ENCODE measurements at regions of chr20 and their contacts with region 1.

Region 1: GRCh38 chr20:31308535-31309162 is at the start of gene DEFB116:
- DNase-seq: no peak
- ATAC-seq: no peak
- H3K4me3 Mint-ChIP-seq: no peak within 1 kb of the TSS
- H3K27ac Mint-ChIP-seq: no peak within 1 kb of the TSS
- H3K4me1 Mint-ChIP-seq: no peaks in the 10 kb centered on the region
- H3K27me3 Mint-ChIP-seq: no peaks in the 10 kb centered on the region
- total RNA-seq, gene DEFB116: not detected

Region 2: DNA sequence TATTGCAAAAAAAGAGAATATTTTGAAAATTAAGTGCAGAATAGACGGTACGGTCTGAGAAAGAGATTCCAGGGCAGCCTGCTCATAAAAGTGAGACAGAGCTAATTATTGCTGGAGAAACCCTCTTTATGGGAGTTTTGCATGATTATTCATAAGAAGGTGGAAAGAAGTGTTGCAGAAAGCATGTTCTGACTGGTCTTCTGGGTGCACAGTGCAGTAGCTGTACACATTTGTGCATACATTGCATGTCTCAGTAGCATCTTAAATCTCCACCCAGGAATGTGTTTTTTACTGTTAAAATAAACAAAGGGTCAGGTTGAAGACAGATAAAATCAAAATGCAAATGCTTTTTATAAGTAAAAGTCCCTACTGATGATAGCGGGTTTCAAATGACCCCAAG is 1864.8 kb before region 1 on chr20:
- CTCF ChIA-PET with region 1: no interaction called
- POLR2A ChIA-PET with region 1: no interaction called
- intact Hi-C with region 1: loop called in 1 of 2 experiments (anchors 5 kb)
- DNase-seq: no peak
- ATAC-seq: no peak
- H3K4me3 Mint-ChIP-seq: no peak overlapping the region
- H3K27ac Mint-ChIP-seq: no peak overlapping the region
- H3K4me1 Mint-ChIP-seq: peaks cover 4% of the 10 kb centered on the region
- H3K27me3 Mint-ChIP-seq: no peaks in the 10 kb centered on the region

Region 3: GRCh38 chr20:31236953-31237352 is 71.7 kb before region 1 on chr20:
- CTCF ChIA-PET with region 1: no interaction called
- POLR2A ChIA-PET with region 1: no interaction called
- intact Hi-C with region 1: loop called in 1 of 2 experiments (anchors 10 kb)
- DNase-seq: no peak
- ATAC-seq: no peak
- H3K4me3 Mint-ChIP-seq: no peak overlapping the region
- H3K27ac Mint-ChIP-seq: no peak overlapping the region
- H3K4me1 Mint-ChIP-seq: no peaks in the 10 kb centered on the region
- H3K27me3 Mint-ChIP-seq: no peaks in the 10 kb centered on the region

Region 4: DNA sequence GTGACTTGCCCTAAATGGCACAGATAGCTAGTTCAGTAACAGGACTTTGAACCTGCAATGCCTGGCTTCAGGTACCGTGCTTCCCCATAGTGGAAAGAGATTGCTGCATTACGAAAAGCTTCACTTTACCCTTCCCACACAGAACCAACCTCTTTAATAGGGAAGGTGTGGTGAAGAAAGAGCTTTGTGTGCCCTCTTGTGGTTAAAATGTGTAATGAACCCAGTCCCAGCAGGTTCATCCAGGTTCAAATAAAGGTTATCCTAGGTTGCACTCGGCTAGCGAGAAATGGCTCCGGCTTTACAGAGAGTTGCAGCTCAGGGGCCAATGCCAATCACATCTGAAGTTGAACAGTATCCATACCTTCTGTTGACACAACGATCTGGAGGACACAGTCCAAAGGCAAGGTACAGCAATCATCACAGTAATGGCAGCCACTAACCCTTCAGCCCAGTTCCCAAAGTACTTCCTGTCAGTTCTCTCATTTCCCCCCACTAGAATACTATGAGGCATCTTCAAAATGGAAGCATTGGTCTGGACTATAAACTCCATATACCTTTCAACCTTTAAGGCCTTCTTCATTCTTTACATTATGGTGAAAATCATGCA is 48.2 kb before region 1 on chr20:
- CTCF ChIA-PET with region 1: no interaction called
- POLR2A ChIA-PET with region 1: no interaction called
- intact Hi-C with region 1: loop called in 1 of 2 experiments (anchors 2 kb)
- DNase-seq: no peak
- ATAC-seq: no peak
- H3K4me3 Mint-ChIP-seq: no peak overlapping the region
- H3K27ac Mint-ChIP-seq: no peak overlapping the region
- H3K4me1 Mint-ChIP-seq: no peaks in the 10 kb centered on the region
- H3K27me3 Mint-ChIP-seq: no peaks in the 10 kb centered on the region

Region 5: DNA sequence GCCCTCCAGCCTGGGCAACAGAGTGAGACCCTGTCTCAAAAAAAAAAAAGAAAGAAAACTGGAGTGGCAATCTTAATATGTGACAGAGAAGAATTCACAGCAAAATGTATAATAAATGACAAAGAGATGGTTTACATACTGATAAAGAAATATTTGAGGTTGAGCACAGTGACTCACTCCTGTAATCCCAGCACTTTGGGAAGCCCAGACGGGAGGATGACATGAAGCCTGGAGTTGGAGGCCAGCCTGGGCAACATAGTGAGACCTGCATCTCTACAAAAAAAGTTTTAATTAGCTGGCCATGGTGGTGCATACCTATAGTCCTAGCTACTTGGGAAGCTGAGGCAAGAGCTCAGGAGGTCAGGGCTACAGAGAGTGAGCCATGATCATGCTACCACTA is 47.3 kb after region 1 on chr20:
- CTCF ChIA-PET with region 1: no interaction called
- POLR2A ChIA-PET with region 1: no interaction called
- intact Hi-C with region 1: no loop called
- DNase-seq: no peak
- ATAC-seq: no peak
- H3K4me3 Mint-ChIP-seq: no peak overlapping the region
- H3K27ac Mint-ChIP-seq: no peak overlapping the region
- H3K4me1 Mint-ChIP-seq: no peaks in the 10 kb centered on the region
- H3K27me3 Mint-ChIP-seq: peaks cover 3% of the 10 kb centered on the region

Region 6: DNA sequence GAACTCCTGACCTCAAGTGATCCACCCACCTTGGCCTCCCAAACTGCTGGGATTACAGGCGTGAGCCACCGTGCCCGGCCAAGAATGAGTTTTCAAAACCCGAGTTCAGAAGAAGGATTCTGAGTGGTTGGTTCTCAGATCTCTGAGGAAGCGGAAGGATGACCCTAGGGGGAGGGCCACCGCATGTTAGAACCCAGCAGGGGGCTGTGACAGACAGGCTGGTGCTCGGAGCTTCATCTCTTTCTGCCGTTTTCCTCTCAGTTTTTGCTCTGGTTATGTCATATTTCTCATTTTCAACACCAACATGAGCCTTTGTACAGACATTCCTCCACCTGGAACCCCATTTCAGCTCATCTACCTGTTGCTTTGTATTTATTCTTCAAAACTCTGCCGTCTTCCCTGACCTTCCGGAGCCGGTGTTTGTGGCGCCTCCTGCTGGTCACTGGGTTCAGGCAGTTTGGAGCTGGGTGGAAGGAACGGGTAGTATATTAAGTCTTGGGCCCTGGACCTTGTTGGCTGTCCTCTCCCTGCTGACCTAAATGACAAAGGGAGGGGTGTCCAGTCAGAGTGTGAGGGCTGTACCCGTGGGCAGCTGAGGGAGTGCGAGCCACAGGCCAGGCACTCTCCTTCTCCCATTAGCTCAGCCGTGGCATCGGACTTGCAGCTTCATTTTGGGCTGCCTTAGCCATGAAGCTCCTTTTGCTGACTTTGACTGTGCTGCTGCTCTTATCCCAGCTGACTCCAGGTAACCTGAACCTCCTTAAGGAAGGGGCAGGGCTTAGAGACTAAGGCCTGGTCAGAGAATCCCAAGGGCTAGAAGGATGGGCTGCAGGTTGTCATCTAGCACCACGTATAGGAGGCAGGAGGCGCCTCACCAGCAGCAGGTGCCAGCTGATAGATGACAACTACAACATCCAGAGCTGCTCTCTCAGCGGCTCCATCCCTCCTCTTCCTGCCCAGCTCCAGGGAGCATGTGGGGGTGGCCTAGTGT is 131.7 kb after region 1 on chr20 and contains the start of gene DEFB123:
- CTCF ChIA-PET with region 1: no interaction called
- POLR2A ChIA-PET with region 1: no interaction called
- intact Hi-C with region 1: no loop called
- DNase-seq: peak; percentile 49
- ATAC-seq: no peak
- H3K4me3 Mint-ChIP-seq: no peak within 1 kb of the TSS
- H3K27ac Mint-ChIP-seq: no peak within 1 kb of the TSS
- H3K4me1 Mint-ChIP-seq: no peaks in the 10 kb centered on the region
- H3K27me3 Mint-ChIP-seq: peaks cover 14% of the 10 kb centered on the region
- total RNA-seq, gene DEFB123: not detected